PC-9 (cell line): ENCODE measurements at regions of chr6 and their contacts with region 1.

Region 1: DNA sequence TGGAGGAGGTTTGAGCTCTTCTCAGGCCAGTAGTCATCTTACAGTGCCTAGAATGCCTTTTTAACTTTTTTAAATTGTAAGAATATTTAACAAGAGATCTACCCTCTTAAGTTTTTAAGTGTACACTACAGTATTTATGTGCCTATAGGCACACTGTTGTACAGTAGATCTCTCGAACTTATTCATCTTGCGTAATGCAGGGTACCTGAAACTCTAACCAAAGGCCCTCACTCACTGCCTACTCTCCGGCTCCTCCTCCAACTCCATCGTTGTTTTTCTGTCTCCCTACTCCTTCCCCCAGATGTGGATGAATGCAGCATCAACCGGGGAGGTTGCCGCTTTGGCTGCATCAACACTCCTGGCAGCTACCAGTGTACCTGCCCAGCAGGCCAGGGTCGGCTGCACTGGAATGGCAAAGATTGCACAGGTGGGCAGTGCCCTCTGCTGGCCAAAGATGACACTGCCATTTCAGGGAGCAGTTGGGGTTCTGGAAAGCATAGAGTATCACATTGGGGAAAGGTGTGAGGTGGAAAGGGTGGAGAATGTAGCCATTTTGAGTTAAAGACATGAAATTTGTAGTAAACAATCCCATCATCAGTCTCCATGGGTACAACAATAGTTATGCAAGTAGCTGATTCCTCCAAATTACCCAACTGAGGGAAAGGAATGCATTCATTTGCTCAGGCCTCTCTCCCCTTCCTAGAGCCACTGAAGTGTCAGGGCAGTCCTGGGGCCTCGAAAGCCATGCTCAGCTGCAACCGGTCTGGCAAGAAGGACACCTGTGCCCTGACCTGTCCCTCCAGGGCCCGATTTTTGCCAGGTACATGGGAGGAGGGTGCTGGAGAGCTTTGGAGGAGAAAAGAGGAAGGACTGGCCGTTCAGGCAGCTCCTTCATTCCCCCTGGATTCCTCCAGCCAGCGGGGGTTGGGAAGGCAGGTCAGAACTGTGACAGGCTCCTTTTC is 18.4 kb upstream of the ZNF76 start:
- DNase-seq: peak; percentile 85 to 94
- H3K4me3 ChIP-seq: no peak overlapping the region
- H3K27ac ChIP-seq: peak overlapping the region; percentile 47
- H3K4me1 ChIP-seq: peaks cover 20% of the 10 kb centered on the region
- H3K27me3 ChIP-seq: no peaks in the 10 kb centered on the region
- CTCF ChIP-seq: peak; percentile 98

Region 2: GRCh38 chr6:34392497-34393190 is 848.5 kb before region 1 on chr6 and contains the start of gene NUDT3:
- CTCF ChIA-PET with region 1: interaction called, 11 read pairs
- POLR2A ChIA-PET with region 1: no interaction called
- intact Hi-C with region 1: no loop called
- DNase-seq: peak; percentile 83 to 92
- H3K4me3 ChIP-seq: peak within 1 kb of the TSS; percentile 99
- H3K27ac ChIP-seq: peak within 1 kb of the TSS; percentile 79
- H3K4me1 ChIP-seq: peaks cover 19% of the 10 kb centered on the region
- H3K27me3 ChIP-seq: no peaks in the 10 kb centered on the region
- CTCF ChIP-seq: peak; percentile 70
- total RNA-seq, gene NUDT3: 16.8 and 19.1 TPM in 2 replicates

Region 3: GRCh38 chr6:34526992-34527728 is 714.0 kb before region 1 on chr6:
- CTCF ChIA-PET with region 1: no interaction called
- POLR2A ChIA-PET with region 1: no interaction called
- intact Hi-C with region 1: loop called (anchors 5 kb)
- DNase-seq: peak; percentile 75 to 93
- H3K4me3 ChIP-seq: peak overlapping the region; percentile 36; the same call in 1 of the 2 replicates
- H3K27ac ChIP-seq: no peak overlapping the region
- H3K4me1 ChIP-seq: peaks cover 12% of the 10 kb centered on the region
- H3K27me3 ChIP-seq: no peaks in the 10 kb centered on the region
- CTCF ChIP-seq: peak; percentile 56

Region 4: GRCh38 chr6:34986845-34987246 is 254.3 kb before region 1 on chr6:
- CTCF ChIA-PET with region 1: interaction called, 4 read pairs
- POLR2A ChIA-PET with region 1: no interaction called
- intact Hi-C with region 1: loop called (anchors 2 kb)
- DNase-seq: peak; percentile 37 to 46
- H3K4me3 ChIP-seq: no peak overlapping the region
- H3K27ac ChIP-seq: no peak overlapping the region
- H3K4me1 ChIP-seq: no peaks in the 10 kb centered on the region
- H3K27me3 ChIP-seq: no peaks in the 10 kb centered on the region
- CTCF ChIP-seq: peak; percentile 92

Region 5: DNA sequence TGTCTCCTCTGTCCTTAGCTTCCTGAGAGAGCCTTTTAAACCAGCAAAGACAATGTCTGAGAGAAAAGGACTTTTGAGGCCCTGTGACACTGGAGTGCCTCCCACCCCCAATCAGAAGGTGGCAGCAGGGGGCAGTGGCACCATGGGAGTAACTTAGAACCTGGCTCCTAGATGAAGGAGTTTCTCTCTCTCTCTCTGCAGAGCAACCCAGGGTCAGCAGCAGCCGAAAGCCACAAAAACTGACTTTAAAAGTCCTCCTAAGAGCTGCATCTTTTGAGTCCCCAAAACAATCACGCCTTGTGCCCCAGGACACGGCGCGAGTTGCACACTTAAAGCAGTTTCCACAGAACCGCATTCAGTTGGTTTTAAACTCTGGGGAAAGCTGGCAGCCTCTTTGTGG is 94.7 kb before region 1 on chr6:
- CTCF ChIA-PET with region 1: interaction called, 5 read pairs
- POLR2A ChIA-PET with region 1: no interaction called
- intact Hi-C with region 1: loop called (anchors 1 kb)
- DNase-seq: peak in 1 of 2 experiments; percentile 52
- H3K4me3 ChIP-seq: no peak overlapping the region
- H3K27ac ChIP-seq: no peak overlapping the region
- H3K4me1 ChIP-seq: peaks cover 14% of the 10 kb centered on the region
- H3K27me3 ChIP-seq: no peaks in the 10 kb centered on the region
- CTCF ChIP-seq: peak; percentile 74

Region 6: DNA sequence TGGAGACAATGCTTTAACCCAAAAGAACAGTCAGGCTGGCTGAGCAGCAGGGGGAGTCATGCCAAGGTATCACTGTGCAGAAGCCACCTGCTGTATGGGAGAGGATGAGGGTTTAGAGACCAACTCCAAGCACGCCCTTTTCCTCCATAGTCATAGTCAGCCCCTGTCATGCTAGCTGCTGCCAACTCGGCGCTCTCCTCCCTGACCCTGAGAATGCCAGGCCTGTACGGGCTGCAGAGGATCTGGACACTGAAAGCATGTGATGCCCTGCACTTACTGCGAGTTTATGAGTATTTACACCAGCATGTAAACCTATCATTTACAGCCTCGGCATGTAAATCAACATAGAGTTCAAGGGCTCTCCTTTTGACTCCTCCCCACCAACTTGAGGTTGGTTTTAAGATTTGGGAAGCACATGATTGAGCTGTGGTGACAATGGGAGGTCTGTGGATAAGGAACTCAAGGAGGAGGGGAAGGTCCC is 39.0 kb before region 1 on chr6:
- CTCF ChIA-PET with region 1: interaction called, 10 read pairs
- POLR2A ChIA-PET with region 1: no interaction called
- intact Hi-C with region 1: loop called (anchors 1 kb)
- DNase-seq: no peak
- H3K4me3 ChIP-seq: no peak overlapping the region
- H3K27ac ChIP-seq: no peak overlapping the region
- H3K4me1 ChIP-seq: peaks cover 17% of the 10 kb centered on the region
- H3K27me3 ChIP-seq: 0 out of 2 replicates have a peak, but pooled peaks cover 7% of the 10 kb centered on the region
- CTCF ChIP-seq: no peak

Region 7: GRCh38 chr6:35209081-35209480 is 32.0 kb before region 1 on chr6:
- CTCF ChIA-PET with region 1: interaction called, 10 read pairs
- POLR2A ChIA-PET with region 1: interaction called, 4 read pairs
- intact Hi-C with region 1: loop called (anchors 1 kb)
- DNase-seq: no peak
- H3K4me3 ChIP-seq: no peak overlapping the region
- H3K27ac ChIP-seq: no peak overlapping the region
- H3K4me1 ChIP-seq: peaks cover under 1% of the 10 kb centered on the region; the same call in 1 of the 2 replicates
- H3K27me3 ChIP-seq: peaks cover 20% of the 10 kb centered on the region
- CTCF ChIP-seq: no peak

Region 8: GRCh38 chr6:35287671-35288396 is 46.7 kb after region 1 on chr6:
- CTCF ChIA-PET with region 1: no interaction called
- POLR2A ChIA-PET with region 1: no interaction called
- intact Hi-C with region 1: no loop called
- DNase-seq: no peak
- H3K4me3 ChIP-seq: no peak overlapping the region
- H3K27ac ChIP-seq: no peak overlapping the region
- H3K4me1 ChIP-seq: no peaks in the 10 kb centered on the region
- H3K27me3 ChIP-seq: no peaks in the 10 kb centered on the region
- CTCF ChIP-seq: no peak

Region 9: DNA sequence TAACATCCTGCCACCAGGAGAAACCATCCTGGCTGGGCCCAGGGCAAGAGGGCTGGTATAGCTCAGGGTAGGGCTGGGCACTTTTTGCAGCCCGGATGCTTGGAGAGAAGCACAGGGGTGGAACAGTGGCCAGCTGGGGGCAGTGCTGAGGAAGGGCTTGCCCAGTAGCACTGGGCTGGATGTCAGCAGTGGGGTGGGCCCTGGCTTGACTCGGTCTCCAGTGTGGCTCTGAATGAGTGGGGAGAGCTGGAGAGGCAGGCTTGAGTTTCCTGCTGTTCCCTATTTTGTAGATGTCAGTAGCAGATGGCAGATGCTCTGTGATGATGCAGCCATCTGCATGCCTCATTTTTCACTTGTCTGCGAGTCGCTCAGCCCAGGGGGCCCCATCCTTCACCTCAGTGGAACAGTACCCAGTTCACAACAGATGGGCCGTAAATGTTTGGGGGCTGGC is 327.9 kb after region 1 on chr6:
- CTCF ChIA-PET with region 1: no interaction called
- POLR2A ChIA-PET with region 1: no interaction called
- intact Hi-C with region 1: no loop called
- DNase-seq: no peak
- H3K4me3 ChIP-seq: no peak overlapping the region
- H3K27ac ChIP-seq: no peak overlapping the region
- H3K4me1 ChIP-seq: no peaks in the 10 kb centered on the region
- H3K27me3 ChIP-seq: 0 out of 2 replicates have a peak, but pooled peaks cover 7% of the 10 kb centered on the region
- CTCF ChIP-seq: 0 out of 2 replicates have a peak, but pooled peaks have one; percentile 19